Dorsolateral prefrontal cortex (tissue), 120 donors: ENCODE measurements at regions of chr19 and their contacts with region 1.

Region 1: GRCh38 chr19:47112997-47113849 is at the start of gene ZC3H4:
- DNase-seq: peak; percentile 95 to 99 (median 98)
- H3K4me3 ChIP-seq: peak within 1 kb of the TSS; percentile 62 to 99 (median 92)
- H3K27ac ChIP-seq: peak within 1 kb of the TSS; percentile 98 to 100 (median 100)
- H3K27me3 ChIP-seq: no peaks in the 10 kb centered on the region
- CTCF ChIP-seq: peak in 6 of 56 donors; percentile 11 to 25 (median 14)
- total RNA-seq, gene ZC3H4: 28.4 to 56.1 (median 40.3) TPM

Region 2: GRCh38 chr19:46954993-46955812 is 158.0 kb before region 1 on chr19:
- intact Hi-C with region 1: no loop called
- DNase-seq: no peak
- H3K4me3 ChIP-seq: peak overlapping the region in 15 of 59 donors; percentile 2 to 28 (median 9)
- H3K27ac ChIP-seq: peak overlapping the region in 52 of 59 donors; percentile 2 to 80 (median 60)
- H3K27me3 ChIP-seq: no peaks in the 10 kb centered on the region
- CTCF ChIP-seq: no peak

Region 3: GRCh38 chr19:47047763-47048405 is 65.3 kb before region 1 on chr19:
- intact Hi-C with region 1: loop called in 1 of 2 experiments (anchors 1 kb)
- DNase-seq: peak; percentile 63 to 97 (median 91)
- H3K4me3 ChIP-seq: peak overlapping the region; percentile 67 to 99 (median 94)
- H3K27ac ChIP-seq: peak overlapping the region in 54 of 59 donors; percentile 20 to 93 (median 82)
- H3K27me3 ChIP-seq: no peaks in the 10 kb centered on the region
- CTCF ChIP-seq: peak in 1 of 56 donors; percentile 2

Region 4: GRCh38 chr19:47075179-47075810 is 37.9 kb before region 1 on chr19:
- intact Hi-C with region 1: loop called in 1 of 2 experiments (anchors 5 kb)
- DNase-seq: no peak
- H3K4me3 ChIP-seq: no peak overlapping the region
- H3K27ac ChIP-seq: peak overlapping the region in 26 of 59 donors; percentile 0 to 71 (median 32)
- H3K27me3 ChIP-seq: no peaks in the 10 kb centered on the region
- CTCF ChIP-seq: no peak